ENCODE measurements at regions of chr21 and their contacts with region 1.

Region 1: GRCh38 chr21:25722631-25723030 is 12.1 kb downstream of the ATP5PF start:
- DNase-seq: no peak
- H3K4me3 ChIP-seq: no peak overlapping the region
- H3K27ac ChIP-seq: no peak overlapping the region
- H3K4me1 ChIP-seq: no peaks in the 10 kb centered on the region
- H3K27me3 ChIP-seq: no peaks in the 10 kb centered on the region
- CTCF ChIP-seq: no peak
- POLR2A ChIP-seq: no peak

Region 2: GRCh38 chr21:25757531-25757930 is 34.9 kb after region 1 on chr21:
- intact Hi-C with region 1: loop called (anchors 2 kb)
- DNase-seq: no peak
- H3K4me3 ChIP-seq: no peak overlapping the region
- H3K27ac ChIP-seq: peak overlapping the region in 1 of 2 donors; percentile 57
- H3K4me1 ChIP-seq: no peaks in the 10 kb centered on the region
- H3K27me3 ChIP-seq: no peaks in the 10 kb centered on the region
- CTCF ChIP-seq: no peak
- POLR2A ChIP-seq: no peak